ENCODE measurements at regions of chr12 and their contacts with region 1.

Region 1: DNA sequence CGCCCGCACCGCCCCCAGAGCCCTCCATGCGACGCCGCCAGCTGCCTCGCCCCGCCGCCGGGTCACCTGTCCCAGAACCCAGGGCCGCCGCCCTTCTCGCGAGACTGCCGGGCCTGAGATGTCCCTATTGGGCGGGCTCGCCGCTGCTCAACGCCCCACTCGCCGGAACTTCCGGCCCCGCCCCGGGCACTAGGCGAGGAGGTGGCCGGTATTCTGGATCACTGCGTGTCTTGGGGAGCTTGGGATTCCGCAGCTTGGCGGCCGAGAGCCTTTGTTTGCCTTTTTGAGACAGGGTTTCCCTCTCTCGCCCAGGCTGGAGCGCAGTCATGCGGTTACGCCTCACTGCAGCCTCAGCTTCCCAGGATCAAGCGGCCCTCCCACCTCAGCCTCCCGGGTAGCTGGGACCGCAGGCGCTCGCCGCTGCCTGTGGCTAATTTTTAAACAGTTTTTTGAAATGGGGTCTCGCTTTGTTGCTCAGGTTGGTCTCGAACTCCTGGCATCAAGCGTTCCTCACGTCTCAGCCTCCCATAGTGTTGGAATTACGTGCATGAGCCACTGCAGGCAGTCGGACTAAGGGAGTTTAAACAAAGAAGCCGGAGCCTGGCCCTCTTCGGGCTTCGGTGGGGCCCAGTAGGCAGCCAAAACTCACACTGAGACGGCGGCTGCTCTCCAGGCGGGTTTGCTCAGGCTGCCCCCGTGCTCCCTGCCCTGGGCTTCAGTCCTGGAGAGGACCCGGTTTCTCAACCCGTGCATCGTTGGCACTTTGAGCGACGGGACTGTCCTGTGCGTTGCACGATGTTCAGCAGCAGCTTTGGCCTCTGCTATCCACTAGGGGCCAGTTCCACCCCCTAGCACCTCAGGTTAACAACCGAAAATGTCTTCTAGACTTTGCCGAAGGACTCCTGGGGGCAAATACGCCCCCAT is at the start of gene SLC15A4:
- DNase-seq: peak; percentile 99
- H3K4me3 Mint-ChIP-seq: peak within 1 kb of the TSS; percentile 77
- H3K27ac Mint-ChIP-seq: peak within 1 kb of the TSS; percentile 68
- H3K4me1 Mint-ChIP-seq: peaks cover 22% of the 10 kb centered on the region
- H3K27me3 Mint-ChIP-seq: no peaks in the 10 kb centered on the region
- CTCF ChIP-seq: no peak
- total RNA-seq, gene SLC15A4: 30.2 and 34.9 TPM in 2 replicates

Region 2: GRCh38 chr12:128844031-128844635 is 20.0 kb after region 1 on chr12:
- CTCF ChIA-PET with region 1: no interaction called
- intact Hi-C with region 1: no loop called
- DNase-seq: no peak
- H3K4me3 Mint-ChIP-seq: no peak overlapping the region
- H3K27ac Mint-ChIP-seq: no peak overlapping the region
- H3K4me1 Mint-ChIP-seq: no peaks in the 10 kb centered on the region
- H3K27me3 Mint-ChIP-seq: no peaks in the 10 kb centered on the region
- CTCF ChIP-seq: no peak

Region 3: DNA sequence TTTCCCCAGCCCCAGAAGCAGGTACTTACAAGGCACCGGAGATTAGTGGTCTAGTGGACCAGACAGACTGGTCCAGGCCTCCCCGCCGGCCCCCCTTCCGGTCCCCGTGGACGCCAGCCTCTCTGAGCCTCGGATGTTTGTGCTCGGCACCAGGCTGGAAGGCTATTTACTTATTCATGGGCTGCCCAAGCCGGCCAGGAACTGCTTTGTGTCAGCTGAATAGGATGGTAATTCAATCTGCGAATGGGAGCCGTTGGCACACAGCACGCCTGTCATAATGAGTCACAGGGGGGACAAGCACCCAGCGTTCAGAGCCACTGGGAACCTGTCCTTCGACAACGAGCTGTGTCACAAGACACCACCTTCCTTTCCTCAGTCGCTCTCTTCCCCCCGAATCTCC is 1809.6 kb after region 1 on chr12:
- CTCF ChIA-PET with region 1: interaction called, 10 read pairs
- intact Hi-C with region 1: no loop called
- DNase-seq: peak; percentile 61
- H3K4me3 Mint-ChIP-seq: peak overlapping the region; percentile 54
- H3K27ac Mint-ChIP-seq: no peak overlapping the region
- H3K4me1 Mint-ChIP-seq: no peaks in the 10 kb centered on the region
- H3K27me3 Mint-ChIP-seq: no peaks in the 10 kb centered on the region
- CTCF ChIP-seq: no peak